Esophagus muscularis mucosa (tissue), 4 donors: ENCODE measurements at regions of chrX and their contacts with region 1.

Region 1: GRCh38 chrX:17046478-17047097 is 100.1 kb downstream of the REPS2 start:
- DNase-seq: no peak
- H3K4me3 ChIP-seq: no peak overlapping the region
- H3K27ac ChIP-seq: no peak overlapping the region
- H3K4me1 ChIP-seq: peaks cover 0 to 23% (median 6%) of the 10 kb centered on the region in 4 donors
- H3K27me3 ChIP-seq: no peaks in the 10 kb centered on the region
- CTCF ChIP-seq: peak; percentile 61 to 71 (median 68)
- EP300 ChIP-seq: no peak
- POLR2A ChIP-seq: no peak

Region 2: GRCh38 chrX:16619024-16619423 is 427.6 kb before region 1 on chrX:
- intact Hi-C with region 1: no loop called
- DNase-seq: no peak
- H3K4me3 ChIP-seq: no peak overlapping the region
- H3K27ac ChIP-seq: no peak overlapping the region
- H3K4me1 ChIP-seq: no peaks in the 10 kb centered on the region
- H3K27me3 ChIP-seq: no peaks in the 10 kb centered on the region
- CTCF ChIP-seq: no peak
- EP300 ChIP-seq: no peak
- POLR2A ChIP-seq: no peak

Region 3: DNA sequence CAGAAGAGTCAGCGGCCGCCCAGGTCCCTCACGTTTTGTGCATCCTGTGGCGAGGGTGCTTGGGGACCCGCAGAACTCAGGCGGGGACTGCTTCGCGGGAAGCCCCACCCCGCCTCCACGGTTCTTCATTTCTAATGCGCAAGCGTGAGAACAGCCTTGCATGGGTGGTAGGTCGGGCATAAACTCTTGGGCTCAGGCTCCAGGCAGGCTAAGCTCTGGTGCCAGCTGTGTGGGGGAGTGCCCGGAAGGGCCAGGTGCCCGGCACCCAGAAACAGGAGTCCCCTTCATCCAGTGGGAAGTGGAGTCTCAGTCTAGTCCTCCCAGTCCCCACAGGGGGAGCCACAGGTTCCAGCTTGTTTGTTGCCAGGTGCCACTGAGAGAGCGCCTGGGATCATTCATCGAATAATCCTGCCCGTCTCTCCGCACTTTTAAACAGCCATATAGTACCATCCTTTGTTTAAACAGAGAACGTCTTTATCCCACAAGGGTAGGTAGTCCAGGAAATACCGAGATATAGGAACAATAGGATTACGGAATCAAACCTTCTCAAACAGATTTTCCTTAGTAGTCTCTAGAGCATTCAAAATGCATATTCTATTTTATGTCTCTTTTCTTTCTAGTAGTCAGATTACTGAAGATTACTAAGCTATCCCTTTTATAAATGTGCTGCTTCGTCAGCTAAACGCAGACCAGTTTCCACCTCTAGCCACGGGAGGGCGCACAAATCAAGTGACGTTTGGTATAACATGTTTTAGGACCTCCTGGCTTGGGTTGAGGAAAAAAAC is 163.7 kb before region 1 on chrX:
- intact Hi-C with region 1: loop called (anchors 5 kb)
- DNase-seq: no peak
- H3K4me3 ChIP-seq: peak overlapping the region; percentile 49 to 61 (median 54)
- H3K27ac ChIP-seq: peak overlapping the region; percentile 68 to 73 (median 70)
- H3K4me1 ChIP-seq: peaks cover 0 to 16% (median 3%) of the 10 kb centered on the region in 4 donors
- H3K27me3 ChIP-seq: peaks cover 0 to 9% (median 0%) of the 10 kb centered on the region in 4 donors
- CTCF ChIP-seq: peak; percentile 55 to 60 (median 60)
- EP300 ChIP-seq: no peak
- POLR2A ChIP-seq: no peak

Region 4: DNA sequence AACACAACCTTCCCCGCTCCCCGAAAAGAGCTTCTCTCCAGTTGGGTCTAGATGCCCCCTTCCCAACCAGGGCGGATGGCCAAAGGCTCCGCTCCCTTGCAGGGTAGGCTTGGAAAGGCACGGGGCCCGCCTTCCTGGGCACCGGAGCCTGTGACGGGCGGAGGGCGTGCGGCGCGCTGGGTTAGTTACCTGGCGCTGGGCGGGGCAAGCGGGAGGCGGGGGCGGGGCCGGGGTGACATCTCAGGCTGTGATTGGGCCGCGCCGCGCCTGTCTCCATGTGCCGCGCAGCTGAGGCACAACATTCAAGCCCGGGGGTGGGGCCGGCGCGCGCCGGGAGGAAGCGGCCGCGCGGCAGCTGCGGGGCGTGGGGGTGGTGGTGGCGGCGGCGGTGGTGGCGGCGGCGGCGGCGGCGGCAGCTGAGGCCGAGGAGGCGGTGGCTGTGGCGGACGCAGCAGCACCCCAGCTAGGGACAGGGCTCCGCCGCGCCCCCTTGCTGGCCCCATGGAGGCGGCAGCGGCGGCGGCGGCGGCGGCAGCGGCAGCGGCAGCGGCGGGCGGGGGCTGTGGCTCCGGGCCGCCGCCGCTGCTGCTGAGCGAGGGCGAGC is 100.1 kb before region 1 on chrX and contains the start of gene REPS2:
- intact Hi-C with region 1: loop called (anchors 10 kb)
- DNase-seq: peak; percentile 93
- H3K4me3 ChIP-seq: peak within 1 kb of the TSS; percentile 65 to 73 (median 66)
- H3K27ac ChIP-seq: peak within 1 kb of the TSS in 3 of 4 donors; percentile 46 to 54 (median 53)
- H3K4me1 ChIP-seq: peaks cover 5 to 13% (median 8%) of the 10 kb centered on the region in 4 donors
- H3K27me3 ChIP-seq: peaks cover 0 to 4% (median 0%) of the 10 kb centered on the region in 4 donors
- CTCF ChIP-seq: no peak
- EP300 ChIP-seq: no peak
- POLR2A ChIP-seq: no peak
- total RNA-seq, gene REPS2: 26.4 to 49.0 (median 33.2) TPM

Region 5: GRCh38 chrX:16993791-16994318 is 52.7 kb before region 1 on chrX:
- intact Hi-C with region 1: no loop called
- DNase-seq: no peak
- H3K4me3 ChIP-seq: no peak overlapping the region
- H3K27ac ChIP-seq: no peak overlapping the region
- H3K4me1 ChIP-seq: peaks cover 0 to 18% (median 6%) of the 10 kb centered on the region in 4 donors
- H3K27me3 ChIP-seq: no peaks in the 10 kb centered on the region
- CTCF ChIP-seq: no peak
- EP300 ChIP-seq: no peak
- POLR2A ChIP-seq: no peak

Region 6: DNA sequence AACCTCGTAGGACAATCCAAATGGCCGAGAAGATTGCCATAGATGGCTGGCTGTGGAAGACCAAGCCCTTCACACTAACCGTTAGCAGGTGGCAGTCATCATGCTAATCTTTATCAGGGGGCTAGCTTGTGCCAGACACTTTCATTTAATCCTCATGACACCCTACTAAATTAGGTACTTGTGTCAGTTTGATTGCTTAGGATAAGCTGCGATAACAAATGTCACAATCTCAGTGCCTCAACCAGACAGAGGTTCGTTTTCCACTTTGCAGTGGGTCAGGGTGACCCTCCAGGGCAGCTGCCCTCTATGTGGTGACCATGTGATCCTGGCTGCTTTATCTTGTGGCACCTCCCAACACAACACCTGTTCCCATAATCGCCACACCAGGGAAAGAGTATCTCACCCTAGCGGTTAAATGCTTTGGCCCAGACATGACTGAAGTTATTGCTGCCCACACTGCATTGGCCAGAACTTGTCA is 39.3 kb before region 1 on chrX:
- intact Hi-C with region 1: loop called (anchors 2 kb)
- DNase-seq: no peak
- H3K4me3 ChIP-seq: no peak overlapping the region
- H3K27ac ChIP-seq: no peak overlapping the region
- H3K4me1 ChIP-seq: peaks cover 0 to 11% (median 0%) of the 10 kb centered on the region in 4 donors
- H3K27me3 ChIP-seq: no peaks in the 10 kb centered on the region
- CTCF ChIP-seq: peak in 2 of 3 experiments; percentile 18 to 32
- EP300 ChIP-seq: no peak
- POLR2A ChIP-seq: no peak